Activated CD4-positive, alpha-beta T cell treated with anti-CD3 and anti-CD28 coated beads for 36 hours (primary cell): ENCODE measurements at regions of chr1 and their contacts with region 1.

Region 1: DNA sequence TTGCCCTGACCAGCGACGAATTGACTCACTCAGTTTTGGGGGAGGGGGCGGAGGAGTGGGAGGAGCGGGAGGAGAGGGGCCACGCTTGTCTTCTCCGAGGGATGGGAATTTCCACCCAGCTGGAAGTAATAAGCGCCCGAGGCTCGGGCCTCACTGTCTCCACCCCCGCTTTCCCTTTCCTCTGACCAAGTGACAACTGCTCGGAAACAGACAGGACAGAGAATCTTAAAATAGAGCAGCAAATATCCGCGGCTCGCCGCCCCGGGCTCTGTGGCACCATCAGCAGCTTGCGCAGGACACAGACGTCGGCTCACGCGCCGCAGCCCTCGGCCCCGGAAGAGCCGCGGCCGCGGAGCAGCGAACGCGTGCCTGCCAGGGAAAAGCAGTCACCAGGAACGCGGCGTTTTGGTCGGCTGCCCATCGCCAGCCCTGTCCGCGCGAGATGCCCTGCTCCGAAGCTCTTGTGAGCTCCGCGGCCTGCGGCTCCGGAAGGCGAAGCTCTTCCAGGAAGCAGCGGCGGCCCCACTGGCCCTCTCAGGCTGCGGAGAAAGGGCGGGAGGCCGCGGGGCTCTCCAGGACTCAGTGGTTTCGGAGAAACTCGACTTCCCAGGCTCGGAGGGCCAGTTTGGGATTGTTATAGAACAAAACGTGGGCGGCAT is 10.7 kb upstream of the RGS16 start:
- DNase-seq: peak; percentile 74
- ATAC-seq: peak; percentile 20
- H3K4me3 Mint-ChIP-seq: peak overlapping the region; percentile 69
- H3K27ac Mint-ChIP-seq: peak overlapping the region; percentile 89
- H3K4me1 Mint-ChIP-seq: peaks cover 52% of the 10 kb centered on the region
- H3K27me3 Mint-ChIP-seq: peaks cover 35% of the 10 kb centered on the region

Region 2: GRCh38 chr1:182249201-182249676 is 365.7 kb before region 1 on chr1:
- CTCF ChIA-PET with region 1: no interaction called
- POLR2A ChIA-PET with region 1: no interaction called
- intact Hi-C with region 1: loop called in 1 of 2 experiments (anchors 5 kb)
- DNase-seq: peak; percentile 76
- ATAC-seq: peak; percentile 93
- H3K4me3 Mint-ChIP-seq: no peak overlapping the region
- H3K27ac Mint-ChIP-seq: peak overlapping the region; percentile 59
- H3K4me1 Mint-ChIP-seq: peaks cover 22% of the 10 kb centered on the region
- H3K27me3 Mint-ChIP-seq: peaks cover 2% of the 10 kb centered on the region

Region 3: DNA sequence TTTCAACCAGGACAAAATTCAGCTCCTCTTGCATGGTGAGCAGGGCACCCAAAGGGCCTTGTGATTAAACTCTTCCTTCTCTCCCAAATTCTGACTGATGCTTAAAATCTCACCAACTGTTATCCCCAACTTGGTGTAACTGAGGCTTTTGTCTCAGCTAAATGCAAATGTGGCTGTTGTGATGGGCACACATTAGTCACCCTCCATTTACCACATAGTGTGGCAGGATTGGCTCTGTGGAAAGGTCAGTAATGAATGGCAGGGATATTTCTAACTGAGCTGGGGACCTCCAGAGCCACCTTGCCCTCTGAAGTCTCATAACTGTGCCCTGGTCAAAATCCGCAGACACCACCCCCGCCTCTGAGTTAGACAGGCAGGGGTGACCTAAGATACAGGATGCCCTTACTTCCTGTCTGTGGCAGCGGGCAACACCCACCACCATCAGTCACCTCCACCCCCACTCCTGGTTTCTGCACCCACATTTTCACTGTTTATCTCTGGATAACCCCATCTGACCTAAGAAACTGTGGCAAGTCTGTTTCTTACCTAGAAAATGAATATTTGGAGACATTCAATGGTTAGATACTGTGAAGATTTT is 14.7 kb after region 1 on chr1:
- CTCF ChIA-PET with region 1: interaction called, 9 read pairs
- POLR2A ChIA-PET with region 1: interaction called, 13 read pairs
- intact Hi-C with region 1: loop called (anchors 1 kb)
- DNase-seq: peak; percentile 80
- ATAC-seq: peak; percentile 85
- H3K4me3 Mint-ChIP-seq: peak overlapping the region; percentile 28
- H3K27ac Mint-ChIP-seq: peak overlapping the region; percentile 47
- H3K4me1 Mint-ChIP-seq: peaks cover 59% of the 10 kb centered on the region
- H3K27me3 Mint-ChIP-seq: peaks cover 10% of the 10 kb centered on the region

Region 4: DNA sequence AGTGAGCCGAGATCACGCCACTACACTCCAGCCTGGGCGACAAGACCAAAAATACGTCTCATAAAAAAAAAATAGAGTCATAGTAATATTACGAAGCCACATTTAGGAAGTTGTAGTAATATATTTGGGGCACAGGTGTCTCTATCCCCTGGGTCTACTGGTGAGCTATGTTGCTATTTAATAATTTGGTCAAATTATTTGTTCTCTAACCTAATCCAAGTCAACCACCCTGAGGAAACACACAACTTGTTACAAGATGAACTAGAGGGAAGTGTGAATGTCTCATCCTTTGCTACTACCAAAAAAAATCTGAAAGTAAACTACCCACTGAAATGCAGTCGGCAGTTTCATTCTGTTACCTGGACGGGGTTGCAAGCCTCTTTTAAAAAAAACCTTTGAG is 34.1 kb after region 1 on chr1:
- CTCF ChIA-PET with region 1: no interaction called
- POLR2A ChIA-PET with region 1: no interaction called
- intact Hi-C with region 1: no loop called
- DNase-seq: no peak
- ATAC-seq: no peak
- H3K4me3 Mint-ChIP-seq: no peak overlapping the region
- H3K27ac Mint-ChIP-seq: no peak overlapping the region
- H3K4me1 Mint-ChIP-seq: peaks cover 5% of the 10 kb centered on the region
- H3K27me3 Mint-ChIP-seq: peaks cover 1% of the 10 kb centered on the region

Region 5: GRCh38 chr1:182716740-182717720 is 102.1 kb after region 1 on chr1:
- CTCF ChIA-PET with region 1: interaction called, 5 read pairs
- POLR2A ChIA-PET with region 1: no interaction called
- intact Hi-C with region 1: loop called in 1 of 2 experiments (anchors 1 kb)
- DNase-seq: no peak
- ATAC-seq: peak; percentile 31
- H3K4me3 Mint-ChIP-seq: no peak overlapping the region
- H3K27ac Mint-ChIP-seq: peak overlapping the region; percentile 17
- H3K4me1 Mint-ChIP-seq: peaks cover 50% of the 10 kb centered on the region
- H3K27me3 Mint-ChIP-seq: peaks cover 2% of the 10 kb centered on the region

Region 6: DNA sequence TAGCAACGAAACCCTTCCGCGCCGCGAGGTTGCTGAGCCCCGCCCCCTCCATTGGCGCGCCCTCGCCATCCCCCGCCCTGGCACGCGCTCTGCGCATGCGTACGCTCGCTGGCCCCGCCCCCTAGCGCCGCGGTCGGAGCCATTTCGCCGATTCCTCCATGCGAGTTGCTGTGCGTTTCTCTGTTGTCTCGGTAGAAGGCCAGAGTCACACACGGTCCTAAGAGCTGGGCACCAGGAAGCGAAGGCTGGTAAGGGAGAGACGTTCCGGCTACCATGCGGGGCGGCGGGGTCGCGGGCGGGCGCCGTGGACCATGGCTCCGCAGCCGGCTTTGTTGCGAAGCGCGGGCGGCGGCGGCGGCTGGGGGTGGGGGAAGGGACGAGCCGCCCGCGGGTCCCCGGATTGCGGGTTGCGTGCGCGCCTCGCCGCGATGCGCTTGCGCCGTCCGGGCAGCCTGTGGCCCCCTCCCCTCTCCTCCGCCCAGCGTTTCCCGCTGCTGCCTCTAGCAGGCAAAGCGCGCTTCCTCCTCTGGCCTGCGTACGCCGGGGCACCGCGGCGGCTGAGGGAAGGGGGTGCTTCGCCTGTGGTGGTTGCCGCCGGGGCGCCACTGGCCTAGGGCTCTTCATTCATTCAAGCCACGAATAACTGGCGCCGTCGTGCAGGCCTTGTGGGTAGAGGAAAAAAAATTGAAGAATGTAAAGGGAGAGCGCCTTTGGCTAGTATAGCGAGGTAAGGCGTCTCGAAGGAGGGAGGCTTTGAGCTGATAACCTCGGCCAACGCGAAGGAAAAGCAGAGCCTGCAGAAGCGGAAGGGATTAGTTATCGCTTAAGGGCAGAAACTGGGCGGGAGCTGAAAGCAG is 224.5 kb after region 1 on chr1 and contains the start of gene DHX9:
- CTCF ChIA-PET with region 1: no interaction called
- POLR2A ChIA-PET with region 1: no interaction called
- intact Hi-C with region 1: loop called (anchors 1 kb)
- DNase-seq: peak; percentile 97
- ATAC-seq: peak; percentile 89
- H3K4me3 Mint-ChIP-seq: peak within 1 kb of the TSS; percentile 92
- H3K27ac Mint-ChIP-seq: peak within 1 kb of the TSS; percentile 99
- H3K4me1 Mint-ChIP-seq: peaks cover 36% of the 10 kb centered on the region
- H3K27me3 Mint-ChIP-seq: no peaks in the 10 kb centered on the region
- total RNA-seq, gene DHX9: 244 to 255 TPM